ENCODE measurements at regions of chr17 and their contacts with region 1.

Region 1: GRCh38 chr17:20226814-20227482 is 217.8 kb downstream of the SPECC1 start:
- DNase-seq: no peak
- H3K4me3 ChIP-seq: no peak overlapping the region
- H3K27me3 ChIP-seq: no peaks in the 10 kb centered on the region
- CTCF ChIP-seq: peak; percentile 91

Region 2: GRCh38 chr17:19992803-19993713 is 233.9 kb before region 1 on chr17:
- CTCF ChIA-PET with region 1: interaction called, 10 read pairs
- POLR2A ChIA-PET with region 1: no interaction called
- DNase-seq: peak; percentile 35
- H3K4me3 ChIP-seq: no peak overlapping the region
- H3K27me3 ChIP-seq: peaks cover 4% of the 10 kb centered on the region; the same call in 1 of the 2 replicates
- CTCF ChIP-seq: peak; percentile 68

Region 3: DNA sequence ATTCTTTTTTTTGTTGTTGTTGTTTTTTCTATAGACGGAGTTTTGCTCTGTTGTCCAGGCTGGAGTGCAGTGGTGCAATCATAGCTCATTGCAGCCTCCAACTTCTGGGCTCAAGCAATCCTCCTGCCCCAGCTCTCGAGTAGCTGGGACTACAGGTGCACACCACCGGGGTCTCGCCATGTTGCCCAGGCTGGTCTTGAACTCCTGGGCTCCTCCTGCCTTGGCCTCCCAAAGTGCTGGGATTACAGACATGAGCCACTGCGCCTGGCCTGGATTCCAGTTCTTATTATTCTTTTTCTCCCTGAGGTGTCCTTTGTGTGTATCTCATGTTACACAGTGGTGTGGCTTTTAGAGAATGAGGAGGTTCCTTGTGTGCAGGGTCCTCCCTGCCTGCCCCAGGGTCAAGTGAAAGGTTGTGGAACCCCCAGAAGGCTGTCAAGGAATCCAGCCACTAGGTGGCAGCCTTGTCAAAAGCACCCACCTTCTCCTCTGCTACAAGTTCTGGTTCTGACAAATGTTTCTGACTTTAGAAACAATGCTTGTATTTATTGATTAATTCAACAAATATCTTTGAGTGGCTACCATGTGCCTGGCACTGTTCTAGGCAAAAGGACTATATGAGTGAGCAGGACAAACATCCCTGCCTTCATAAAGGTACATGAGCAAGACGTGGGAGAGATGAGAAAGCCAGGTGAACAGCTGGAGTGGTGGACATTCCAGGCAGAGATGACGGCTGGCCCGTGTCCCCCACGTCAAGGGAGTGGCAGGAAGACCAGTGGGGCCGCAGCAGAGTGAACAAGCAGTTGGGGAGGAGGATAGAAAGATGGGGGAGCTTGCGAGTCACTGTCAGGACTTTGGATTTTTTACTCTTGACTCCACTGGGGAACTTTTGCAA is 105.3 kb before region 1 on chr17:
- CTCF ChIA-PET with region 1: interaction called, 45 read pairs
- POLR2A ChIA-PET with region 1: no interaction called
- DNase-seq: no peak
- H3K4me3 ChIP-seq: no peak overlapping the region
- H3K27me3 ChIP-seq: no peaks in the 10 kb centered on the region
- CTCF ChIP-seq: peak; percentile 88

Region 4: DNA sequence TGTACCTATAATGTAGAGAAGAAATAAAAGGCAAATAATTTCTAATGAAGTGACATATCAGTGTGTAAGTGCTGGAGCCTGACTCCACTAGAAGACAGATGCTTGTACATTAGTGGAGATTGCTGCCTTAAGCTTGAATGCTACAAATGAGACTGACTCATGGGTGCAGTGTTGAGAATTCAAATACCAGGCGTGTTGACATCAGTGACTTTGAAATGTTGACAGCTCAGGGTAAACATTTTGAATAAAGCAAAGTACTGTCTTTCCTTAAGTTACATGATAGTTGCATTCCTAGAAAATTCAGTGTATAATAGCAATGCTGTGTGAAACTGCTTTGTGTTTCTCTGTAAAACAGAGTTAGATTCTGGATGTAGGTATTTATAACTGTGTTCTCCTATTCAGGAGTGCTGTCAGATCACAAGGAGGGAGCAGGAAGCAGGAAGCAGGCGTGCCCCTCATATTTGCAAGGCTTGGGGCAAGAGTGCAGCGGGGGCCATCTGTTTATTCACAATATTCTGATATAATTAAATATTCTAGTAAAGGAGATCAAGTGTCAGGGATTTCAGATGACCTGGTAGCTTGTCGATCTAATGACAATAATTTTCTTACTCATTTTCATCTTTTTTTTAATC is 98.8 kb before region 1 on chr17:
- CTCF ChIA-PET with region 1: interaction called, 19 read pairs
- POLR2A ChIA-PET with region 1: no interaction called
- DNase-seq: peak; percentile 19
- H3K4me3 ChIP-seq: no peak overlapping the region
- H3K27me3 ChIP-seq: no peaks in the 10 kb centered on the region
- CTCF ChIP-seq: no peak

Region 5: GRCh38 chr17:20206068-20206467 is 20.9 kb before region 1 on chr17:
- CTCF ChIA-PET with region 1: interaction called, 15 read pairs
- POLR2A ChIA-PET with region 1: no interaction called
- DNase-seq: no peak
- H3K4me3 ChIP-seq: no peak overlapping the region
- H3K27me3 ChIP-seq: no peaks in the 10 kb centered on the region
- CTCF ChIP-seq: no peak

Region 6: GRCh38 chr17:20299013-20299412 is 72.1 kb after region 1 on chr17:
- CTCF ChIA-PET with region 1: no interaction called
- POLR2A ChIA-PET with region 1: no interaction called
- DNase-seq: no peak
- H3K4me3 ChIP-seq: no peak overlapping the region
- H3K27me3 ChIP-seq: no peaks in the 10 kb centered on the region
- CTCF ChIP-seq: no peak

Region 7: DNA sequence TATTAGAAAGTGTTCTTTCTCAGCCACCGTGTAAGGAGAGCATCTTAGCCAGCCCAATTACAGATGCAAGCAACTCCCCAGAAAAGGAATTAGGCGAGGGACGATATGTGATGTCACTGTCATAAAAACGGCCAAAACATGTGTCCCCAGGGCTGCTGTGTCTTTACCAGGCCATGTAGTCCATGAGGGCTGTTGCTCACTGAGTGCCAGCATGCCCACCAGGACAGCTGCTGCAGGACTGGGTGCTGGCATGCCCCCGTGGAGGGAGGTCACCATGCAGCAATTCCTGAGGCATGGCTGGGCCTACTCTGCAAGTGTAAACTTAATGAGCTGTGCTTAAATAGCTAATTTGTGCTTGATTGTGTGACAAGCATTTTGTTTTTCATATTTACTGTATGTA is 83.5 kb after region 1 on chr17:
- CTCF ChIA-PET with region 1: interaction called, 113 read pairs
- POLR2A ChIA-PET with region 1: no interaction called
- DNase-seq: no peak
- H3K4me3 ChIP-seq: no peak overlapping the region
- H3K27me3 ChIP-seq: no peaks in the 10 kb centered on the region
- CTCF ChIP-seq: no peak

Region 8: GRCh38 chr17:20315821-20316220 is 88.9 kb after region 1 on chr17:
- CTCF ChIA-PET with region 1: interaction called, 113 read pairs
- POLR2A ChIA-PET with region 1: no interaction called
- DNase-seq: no peak
- H3K4me3 ChIP-seq: no peak overlapping the region
- H3K27me3 ChIP-seq: no peaks in the 10 kb centered on the region
- CTCF ChIP-seq: no peak

Measured in BJ (cell line).